Activated B cell treated with CpG ODN at 0.5 μM for 24 hours (primary cell): ENCODE measurements at regions of chr17 and their contacts with region 1.

Region 1: DNA sequence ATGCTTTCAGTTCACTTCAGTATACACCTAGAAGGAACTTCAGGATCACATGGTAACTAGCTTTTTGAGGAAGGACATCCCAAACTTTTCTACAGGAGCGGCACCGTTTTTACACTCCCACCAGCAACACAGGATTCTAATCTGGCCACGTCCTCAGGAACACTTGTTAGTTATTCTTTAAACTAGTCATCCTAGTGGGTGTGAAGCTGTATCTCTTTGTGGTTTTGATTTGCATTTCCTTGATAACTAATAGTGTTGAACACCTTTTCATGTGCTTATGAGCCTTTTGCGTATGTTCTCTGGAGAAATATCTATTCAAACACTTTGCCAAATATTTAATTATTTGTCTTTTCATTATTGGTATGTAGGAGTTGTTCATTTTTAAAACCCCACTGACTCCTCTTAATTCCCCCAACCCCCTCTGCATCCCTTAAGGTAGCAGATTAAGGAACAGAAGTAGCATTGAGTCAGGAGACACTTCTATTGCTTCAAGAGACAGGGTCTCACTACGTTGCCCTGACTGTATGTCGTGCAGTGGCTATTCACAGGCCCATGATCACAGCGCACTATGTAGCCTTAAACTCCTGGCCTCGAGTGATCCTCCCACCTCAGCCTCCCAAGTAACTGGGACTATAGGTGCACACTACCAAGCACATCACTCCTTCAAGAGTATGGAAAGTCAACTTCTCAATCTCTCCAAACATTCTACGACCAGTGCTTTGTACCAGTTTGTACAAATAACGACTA is 25.4 kb downstream of the YWHAE start:
- DNase-seq: no peak
- ATAC-seq: peak; percentile 71
- H3K4me3 Mint-ChIP-seq: peak overlapping the region; percentile 21
- H3K27ac Mint-ChIP-seq: peak overlapping the region; percentile 63
- H3K4me1 Mint-ChIP-seq: peaks cover 86% of the 10 kb centered on the region
- H3K27me3 Mint-ChIP-seq: no peaks in the 10 kb centered on the region
- CTCF ChIP-seq: no peak

Region 2: DNA sequence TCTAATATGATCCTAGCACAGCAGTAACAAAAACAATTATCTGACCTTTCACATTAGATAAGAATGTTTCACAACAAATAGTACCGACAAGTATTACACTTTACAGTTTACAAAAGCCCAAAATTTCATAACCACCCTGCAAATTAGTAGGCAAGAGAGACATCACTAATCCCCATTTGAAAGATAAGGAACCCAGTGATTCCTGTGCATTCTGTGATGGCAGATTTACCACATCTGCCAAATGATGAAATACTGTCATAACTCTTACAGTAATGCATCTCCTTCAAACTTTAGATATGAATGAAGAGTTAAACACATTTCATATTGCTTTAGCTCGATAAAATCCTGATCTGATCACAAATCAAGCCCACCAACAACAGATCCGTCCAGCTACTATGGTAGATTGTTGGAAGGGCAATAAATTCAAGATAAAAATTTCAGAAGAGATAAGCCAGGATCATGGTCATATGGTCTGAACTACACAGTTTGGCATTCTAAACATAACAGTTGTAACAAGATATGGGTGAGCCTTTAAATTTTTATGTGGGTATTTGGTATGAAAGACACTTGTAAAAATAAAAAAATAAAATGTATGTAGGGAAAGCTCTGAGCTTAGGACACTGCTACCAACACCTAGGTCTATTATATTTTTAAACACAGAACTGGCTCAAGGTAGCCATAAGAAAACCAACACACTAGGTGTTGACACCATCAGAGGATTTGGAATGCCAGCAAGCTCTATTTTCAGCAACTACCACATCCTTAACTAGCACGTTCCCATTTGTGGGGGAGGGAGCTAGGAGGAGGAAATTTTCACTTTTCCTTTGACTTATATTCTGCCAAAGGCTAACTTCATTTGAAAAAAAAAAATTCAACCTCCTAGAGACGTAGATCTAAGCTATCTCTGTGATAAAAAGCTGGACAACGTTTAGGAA is 16.1 kb after region 1 on chr17:
- CTCF ChIA-PET with region 1: interaction called, 5 read pairs
- POLR2A ChIA-PET with region 1: interaction called, 4 read pairs
- intact Hi-C with region 1: loop called (anchors 2 kb)
- DNase-seq: no peak
- ATAC-seq: no peak
- H3K4me3 Mint-ChIP-seq: peak overlapping the region; percentile 19
- H3K27ac Mint-ChIP-seq: no peak overlapping the region
- H3K4me1 Mint-ChIP-seq: peaks cover 87% of the 10 kb centered on the region
- H3K27me3 Mint-ChIP-seq: no peaks in the 10 kb centered on the region
- CTCF ChIP-seq: no peak